Breast epithelium (tissue), 4 donors: ENCODE measurements at regions of chr1 and their contacts with region 1.

Region 1: DNA sequence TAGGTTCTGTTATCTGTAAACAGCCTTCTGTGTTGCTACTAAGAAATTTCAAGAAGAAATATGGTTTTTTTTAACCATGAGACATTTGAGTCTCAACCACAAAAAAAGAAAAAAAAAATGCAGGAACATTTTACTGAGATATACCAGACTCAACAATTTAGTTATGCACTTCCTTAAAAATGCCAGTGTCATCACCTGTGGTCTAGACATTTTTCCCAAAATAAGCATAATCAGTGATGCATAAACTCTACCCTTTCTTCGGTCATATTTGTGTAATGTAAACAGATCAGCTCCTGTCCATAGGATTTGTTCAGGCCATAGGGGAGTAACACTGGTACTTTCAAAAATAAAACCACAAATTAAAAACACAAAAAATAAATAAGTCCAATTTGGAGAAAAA is 122.6 kb upstream of the TNFSF4 start:
- DNase-seq: no peak
- H3K4me3 ChIP-seq: no peak overlapping the region
- H3K27ac ChIP-seq: no peak overlapping the region
- H3K4me1 ChIP-seq: peaks cover 0 to 4% of the 10 kb centered on the region in 2 donors
- H3K27me3 ChIP-seq: no peaks in the 10 kb centered on the region
- CTCF ChIP-seq: no peak
- POLR2A ChIP-seq: no peak

Region 2: GRCh38 chr1:172561252-172561651 is 768.5 kb before region 1 on chr1:
- intact Hi-C with region 1: no loop called
- DNase-seq: no peak
- H3K4me3 ChIP-seq: no peak overlapping the region
- H3K27ac ChIP-seq: no peak overlapping the region
- H3K4me1 ChIP-seq: no peaks in the 10 kb centered on the region
- H3K27me3 ChIP-seq: no peaks in the 10 kb centered on the region
- CTCF ChIP-seq: no peak
- POLR2A ChIP-seq: no peak

Region 3: GRCh38 chr1:173190101-173190906 is 139.4 kb before region 1 on chr1:
- intact Hi-C with region 1: loop called (anchors 5 kb)
- DNase-seq: peak; percentile 63 to 92
- H3K4me3 ChIP-seq: no peak overlapping the region
- H3K27ac ChIP-seq: peak overlapping the region; percentile 76 to 84
- H3K4me1 ChIP-seq: peaks cover 0 to 10% of the 10 kb centered on the region in 2 donors
- H3K27me3 ChIP-seq: no peaks in the 10 kb centered on the region
- CTCF ChIP-seq: no peak
- POLR2A ChIP-seq: no peak

Region 4: GRCh38 chr1:173249349-173249748 is 80.4 kb before region 1 on chr1:
- intact Hi-C with region 1: no loop called
- DNase-seq: no peak
- H3K4me3 ChIP-seq: no peak overlapping the region
- H3K27ac ChIP-seq: no peak overlapping the region
- H3K4me1 ChIP-seq: no peaks in the 10 kb centered on the region
- H3K27me3 ChIP-seq: no peaks in the 10 kb centered on the region
- CTCF ChIP-seq: no peak
- POLR2A ChIP-seq: no peak

Region 5: DNA sequence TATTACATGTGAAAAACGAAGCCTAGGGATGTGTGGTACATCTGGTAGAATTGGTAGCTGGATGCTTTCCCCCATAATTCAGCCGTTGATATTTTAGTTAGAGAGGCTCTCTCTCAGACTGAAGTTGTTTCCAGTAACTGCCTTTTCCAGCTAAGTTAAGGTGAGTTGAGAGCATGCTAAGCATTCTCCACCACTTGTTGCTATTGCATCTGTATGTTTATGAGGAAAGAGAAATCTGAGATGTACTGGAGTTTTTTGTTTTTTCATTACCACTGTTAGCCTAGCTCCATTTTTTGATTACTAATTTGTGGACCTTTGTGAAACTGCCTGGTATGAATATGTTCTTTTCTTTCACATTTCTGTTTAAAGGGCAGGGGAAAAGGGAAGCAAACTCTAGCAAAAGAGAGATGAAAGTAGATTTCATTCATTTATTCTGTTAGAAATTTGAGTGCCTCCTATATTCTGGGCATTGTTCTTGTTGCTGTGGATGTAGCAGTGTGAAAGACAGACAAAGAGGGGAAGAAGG is 1480.1 kb after region 1 on chr1:
- intact Hi-C with region 1: no loop called
- DNase-seq: no peak
- H3K4me3 ChIP-seq: no peak overlapping the region
- H3K27ac ChIP-seq: no peak overlapping the region
- H3K4me1 ChIP-seq: no peaks in the 10 kb centered on the region
- H3K27me3 ChIP-seq: no peaks in the 10 kb centered on the region
- CTCF ChIP-seq: no peak
- POLR2A ChIP-seq: no peak